Naive thymus-derived CD4-positive, alpha-beta T cell (primary cell): ENCODE measurements at regions of chr13 and their contacts with region 1.

Region 1: GRCh38 chr13:112942689-112943308 is 26.2 kb upstream of the MCF2L start:
- DNase-seq: peak; percentile 83 to 96 (median 90)
- ATAC-seq: peak; percentile 100
- H3K4me3 ChIP-seq: peak overlapping the region; percentile 63
- H3K4me3 Mint-ChIP-seq: peak overlapping the region; percentile 77 to 99 (median 88)
- H3K27ac ChIP-seq: no peak overlapping the region
- H3K27ac Mint-ChIP-seq: peak overlapping the region in 4 of 9 donors; percentile 14 to 80 (median 46)
- H3K4me1 ChIP-seq: peaks cover 0 to 9% of the 10 kb centered on the region in 2 donors
- H3K4me1 Mint-ChIP-seq: peaks cover 7 to 12% (median 9%) of the 10 kb centered on the region in 7 donors
- H3K27me3 ChIP-seq: peaks cover 3 to 4% of the 10 kb centered on the region in 2 donors
- H3K27me3 Mint-ChIP-seq: peaks cover 8 to 52% (median 21%) of the 10 kb centered on the region in 5 donors

Region 2: GRCh38 chr13:113001241-113002140 is 58.7 kb after region 1 on chr13:
- CTCF ChIA-PET with region 1: no interaction called
- POLR2A ChIA-PET with region 1: no interaction called
- intact Hi-C with region 1: loop called in 1 of 2 experiments (anchors 2 kb)
- DNase-seq: no peak
- ATAC-seq: no peak
- H3K4me3 ChIP-seq: no peak overlapping the region
- H3K4me3 Mint-ChIP-seq: peak overlapping the region in 9 of 10 donors; percentile 4 to 67 (median 45)
- H3K27ac ChIP-seq: no peak overlapping the region
- H3K27ac Mint-ChIP-seq: peak overlapping the region in 1 of 9 donors; percentile 46
- H3K4me1 ChIP-seq: peaks cover 0 to 5% of the 10 kb centered on the region in 2 donors
- H3K4me1 Mint-ChIP-seq: peaks cover 4 to 36% (median 22%) of the 10 kb centered on the region in 7 donors
- H3K27me3 ChIP-seq: no peaks in the 10 kb centered on the region
- H3K27me3 Mint-ChIP-seq: peaks cover 0 to 13% (median 0%) of the 10 kb centered on the region in 5 donors

Region 3: GRCh38 chr13:113153810-113154748 is 211.3 kb after region 1 on chr13:
- CTCF ChIA-PET with region 1: no interaction called
- POLR2A ChIA-PET with region 1: interaction called, 3 read pairs
- intact Hi-C with region 1: loop called in 1 of 2 experiments (anchors 1 kb)
- DNase-seq: peak; percentile 55 to 76 (median 70)
- ATAC-seq: peak; percentile 89
- H3K4me3 ChIP-seq: peak overlapping the region; percentile 82
- H3K4me3 Mint-ChIP-seq: peak overlapping the region; percentile 78 to 99 (median 86)
- H3K27ac ChIP-seq: peak overlapping the region; percentile 68
- H3K27ac Mint-ChIP-seq: peak overlapping the region in 8 of 9 donors; percentile 84 to 96 (median 88)
- H3K4me1 ChIP-seq: peaks cover 15 to 16% of the 10 kb centered on the region in 2 donors
- H3K4me1 Mint-ChIP-seq: peaks cover 9 to 26% (median 21%) of the 10 kb centered on the region in 7 donors
- H3K27me3 ChIP-seq: no peaks in the 10 kb centered on the region
- H3K27me3 Mint-ChIP-seq: peaks cover 0 to 27% (median 7%) of the 10 kb centered on the region in 5 donors

Region 4: DNA sequence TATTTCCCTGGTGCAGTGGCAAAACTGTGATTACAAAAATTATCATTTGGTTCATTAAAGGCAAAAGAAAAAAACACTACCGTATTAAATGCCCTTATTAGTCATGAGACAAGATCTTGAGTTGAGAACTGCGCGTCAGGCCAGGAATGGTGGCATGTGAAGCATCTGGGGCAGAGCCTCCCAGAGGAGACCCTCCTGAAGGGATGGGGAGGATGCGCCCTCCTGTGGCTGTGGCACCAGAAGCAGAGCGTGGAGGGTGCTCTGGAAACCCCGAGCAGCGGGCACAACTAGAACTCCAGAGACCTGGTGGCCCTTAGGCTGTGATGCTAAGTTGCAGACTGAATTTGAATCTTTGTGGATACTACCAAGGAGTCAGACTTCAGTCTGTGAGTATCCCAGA is 278.1 kb after region 1 on chr13:
- CTCF ChIA-PET with region 1: no interaction called
- POLR2A ChIA-PET with region 1: no interaction called
- intact Hi-C with region 1: loop called in 1 of 2 experiments (anchors 1 kb)
- DNase-seq: peak in 3 of 9 donors; percentile 12 to 24 (median 20)
- ATAC-seq: peak; percentile 65
- H3K4me3 ChIP-seq: no peak overlapping the region
- H3K4me3 Mint-ChIP-seq: no peak overlapping the region
- H3K27ac ChIP-seq: no peak overlapping the region
- H3K27ac Mint-ChIP-seq: peak overlapping the region in 4 of 9 donors; percentile 15 to 59 (median 47)
- H3K4me1 ChIP-seq: peaks cover 0 to under 1% of the 10 kb centered on the region in 2 donors
- H3K4me1 Mint-ChIP-seq: peaks cover 15 to 26% (median 20%) of the 10 kb centered on the region in 7 donors
- H3K27me3 ChIP-seq: no peaks in the 10 kb centered on the region
- H3K27me3 Mint-ChIP-seq: no peaks in the 10 kb centered on the region

Region 5: DNA sequence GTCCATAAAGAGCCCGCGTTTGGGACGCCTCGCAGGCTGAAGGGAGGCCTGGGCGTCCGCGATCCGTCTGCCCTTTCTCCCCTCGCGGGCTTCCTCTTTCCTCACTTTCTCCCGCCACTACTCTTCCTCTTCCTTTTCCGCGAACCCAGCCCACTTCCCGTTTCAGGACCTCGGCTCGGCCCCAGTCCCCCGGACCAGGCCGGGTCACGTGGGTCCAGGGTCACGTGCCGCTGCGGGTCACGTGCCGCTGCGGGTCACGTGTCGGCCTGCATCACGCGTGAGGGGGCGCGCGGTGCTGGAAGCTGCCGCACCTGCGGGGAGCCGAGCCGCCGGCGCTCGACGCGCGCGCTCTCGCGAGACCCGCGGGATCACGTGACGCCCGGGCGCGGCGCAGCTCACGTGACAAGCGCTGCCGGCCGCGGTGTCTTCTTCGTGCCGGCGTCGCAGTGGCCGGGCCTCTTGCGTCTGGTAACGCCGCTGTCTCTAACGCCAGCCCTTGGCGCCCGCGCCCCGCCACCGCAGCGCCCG is 354.1 kb after region 1 on chr13 and contains the start of gene LAMP1:
- CTCF ChIA-PET with region 1: no interaction called
- POLR2A ChIA-PET with region 1: no interaction called
- intact Hi-C with region 1: loop called in 1 of 2 experiments (anchors 2 kb)
- DNase-seq: peak; percentile 97 to 100 (median 99)
- ATAC-seq: peak; percentile 92
- H3K4me3 ChIP-seq: peak within 1 kb of the TSS; percentile 96
- H3K4me3 Mint-ChIP-seq: peak within 1 kb of the TSS; percentile 88 to 99 (median 98)
- H3K27ac ChIP-seq: peak within 1 kb of the TSS; percentile 90
- H3K27ac Mint-ChIP-seq: peak within 1 kb of the TSS; percentile 98 to 100 (median 100)
- H3K4me1 ChIP-seq: peaks cover 14 to 19% of the 10 kb centered on the region in 2 donors
- H3K4me1 Mint-ChIP-seq: peaks cover 28 to 45% (median 39%) of the 10 kb centered on the region in 7 donors
- H3K27me3 ChIP-seq: no peaks in the 10 kb centered on the region
- H3K27me3 Mint-ChIP-seq: peaks cover 8 to 37% (median 13%) of the 10 kb centered on the region in 5 donors
- total RNA-seq, gene LAMP1: 77.3 to 113 (median 98.8) TPM

Region 6: DNA sequence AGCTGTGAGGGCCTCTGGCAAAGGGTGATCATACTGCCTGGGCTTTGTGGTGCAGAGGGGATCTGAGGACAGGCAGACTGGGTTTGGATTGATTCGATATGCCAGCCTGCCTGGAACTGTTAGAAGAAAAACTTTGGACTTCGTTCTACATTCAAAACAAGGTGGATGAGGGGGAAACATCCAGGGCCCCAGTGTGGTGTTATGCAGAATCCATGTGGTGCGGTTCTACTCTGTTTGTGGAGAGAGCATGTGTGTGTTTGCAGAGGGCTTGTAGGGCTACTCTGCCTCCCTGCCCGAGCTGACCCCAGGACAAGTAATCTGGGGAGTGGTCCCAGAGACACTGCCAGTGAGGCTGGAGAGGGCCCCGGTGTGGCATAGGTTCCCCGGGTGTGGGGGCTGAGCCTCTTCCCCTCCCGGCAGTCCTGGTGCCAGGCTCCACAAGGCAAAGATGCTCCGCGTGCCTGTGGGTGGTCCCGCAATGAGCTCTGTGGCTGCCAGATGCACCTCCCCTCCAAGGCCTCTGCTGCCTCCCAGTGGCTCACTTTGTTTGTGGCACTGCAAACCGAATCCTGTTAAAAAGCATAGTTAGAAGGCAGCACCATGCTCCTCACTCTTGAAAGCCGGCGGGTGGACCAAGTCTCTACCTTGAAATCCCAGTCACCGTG is 619.4 kb after region 1 on chr13:
- CTCF ChIA-PET with region 1: interaction called, 3 read pairs
- POLR2A ChIA-PET with region 1: no interaction called
- intact Hi-C with region 1: loop called (anchors 1 to 2 kb)
- DNase-seq: peak in 7 of 9 donors; percentile 14 to 43 (median 35)
- ATAC-seq: peak; percentile 67
- H3K4me3 ChIP-seq: no peak overlapping the region
- H3K4me3 Mint-ChIP-seq: no peak overlapping the region
- H3K27ac ChIP-seq: no peak overlapping the region
- H3K27ac Mint-ChIP-seq: peak overlapping the region in 1 of 9 donors; percentile 67
- H3K4me1 ChIP-seq: no peaks in the 10 kb centered on the region
- H3K4me1 Mint-ChIP-seq: peaks cover 0 to 5% (median 4%) of the 10 kb centered on the region in 7 donors
- H3K27me3 ChIP-seq: no peaks in the 10 kb centered on the region
- H3K27me3 Mint-ChIP-seq: peaks cover 0 to 14% (median 4%) of the 10 kb centered on the region in 5 donors